ENCODE measurements at regions of chr1 and their contacts with region 1.

Region 1: DNA sequence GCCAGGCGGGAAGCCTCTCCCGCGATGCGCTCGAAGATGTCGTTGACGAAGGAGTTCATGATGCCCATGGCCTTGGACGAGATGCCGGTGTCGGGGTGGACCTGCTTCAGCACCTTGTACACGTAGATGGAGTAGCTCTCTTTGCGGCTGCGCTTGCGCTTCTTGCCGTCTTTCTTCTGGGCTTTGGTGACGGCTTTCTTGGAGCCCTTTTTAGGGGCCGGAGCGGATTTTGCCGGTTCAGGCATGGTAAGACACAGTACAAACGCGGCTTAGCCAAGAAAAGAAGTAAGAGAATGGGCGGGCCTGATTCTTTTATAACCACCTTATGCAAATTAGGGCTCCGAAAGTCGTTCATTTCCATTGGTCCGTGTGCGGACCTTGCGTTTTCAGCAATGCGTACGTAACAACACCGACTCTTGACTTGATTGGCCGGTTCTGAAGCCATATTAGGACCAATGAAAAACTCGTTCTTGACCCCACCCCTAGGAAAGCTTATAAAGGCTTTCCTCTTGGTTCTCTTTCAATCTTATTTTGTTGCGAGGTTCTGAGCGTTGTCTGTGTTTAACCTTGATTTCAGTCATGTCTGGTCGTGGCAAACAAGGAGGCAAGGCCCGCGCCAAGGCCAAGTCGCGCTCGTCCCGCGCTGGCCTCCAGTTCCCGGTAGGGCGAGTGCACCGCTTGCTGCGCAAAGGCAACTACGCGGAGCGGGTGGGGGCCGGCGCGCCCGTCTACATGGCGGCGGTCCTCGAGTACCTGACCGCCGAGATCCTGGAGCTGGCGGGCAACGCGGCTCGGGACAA is 12.8 kb upstream of the BOLA1 start:
- DNase-seq: peak; percentile 90
- CTCF ChIP-seq: no peak

Region 2: GRCh38 chr1:149844101-149844500 is 42.5 kb before region 1 on chr1:
- CTCF ChIA-PET with region 1: interaction called, 4 read pairs
- POLR2A ChIA-PET with region 1: interaction called, 28 read pairs
- DNase-seq: no peak
- CTCF ChIP-seq: no peak

Region 3: DNA sequence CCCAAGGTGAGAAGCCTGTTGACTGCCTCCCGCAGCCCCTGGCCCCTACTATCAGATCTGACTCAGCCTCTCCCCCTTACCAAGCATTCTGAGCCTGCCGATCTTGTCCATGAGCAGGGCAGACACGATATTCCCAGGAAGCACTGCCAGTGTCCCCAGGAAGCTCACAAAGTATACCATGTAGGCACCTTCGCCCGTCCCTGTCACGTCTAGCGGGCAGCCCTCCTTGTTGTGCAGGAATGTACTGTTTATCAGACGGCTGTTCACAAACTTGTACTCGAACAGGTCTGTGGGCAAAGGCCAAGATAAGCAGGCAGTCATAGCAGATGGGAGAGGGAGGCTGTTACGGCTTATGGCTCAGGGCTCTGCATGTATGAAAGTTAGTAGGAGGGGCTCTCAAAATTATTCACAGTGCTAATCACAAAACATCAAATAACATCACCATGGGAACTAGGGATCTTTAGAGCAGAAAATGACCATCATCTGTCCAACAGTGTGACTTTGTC is 20.0 kb after region 1 on chr1:
- CTCF ChIA-PET with region 1: interaction called, 4 read pairs
- POLR2A ChIA-PET with region 1: interaction called, 11 read pairs
- DNase-seq: no peak
- CTCF ChIP-seq: no peak

Region 4: DNA sequence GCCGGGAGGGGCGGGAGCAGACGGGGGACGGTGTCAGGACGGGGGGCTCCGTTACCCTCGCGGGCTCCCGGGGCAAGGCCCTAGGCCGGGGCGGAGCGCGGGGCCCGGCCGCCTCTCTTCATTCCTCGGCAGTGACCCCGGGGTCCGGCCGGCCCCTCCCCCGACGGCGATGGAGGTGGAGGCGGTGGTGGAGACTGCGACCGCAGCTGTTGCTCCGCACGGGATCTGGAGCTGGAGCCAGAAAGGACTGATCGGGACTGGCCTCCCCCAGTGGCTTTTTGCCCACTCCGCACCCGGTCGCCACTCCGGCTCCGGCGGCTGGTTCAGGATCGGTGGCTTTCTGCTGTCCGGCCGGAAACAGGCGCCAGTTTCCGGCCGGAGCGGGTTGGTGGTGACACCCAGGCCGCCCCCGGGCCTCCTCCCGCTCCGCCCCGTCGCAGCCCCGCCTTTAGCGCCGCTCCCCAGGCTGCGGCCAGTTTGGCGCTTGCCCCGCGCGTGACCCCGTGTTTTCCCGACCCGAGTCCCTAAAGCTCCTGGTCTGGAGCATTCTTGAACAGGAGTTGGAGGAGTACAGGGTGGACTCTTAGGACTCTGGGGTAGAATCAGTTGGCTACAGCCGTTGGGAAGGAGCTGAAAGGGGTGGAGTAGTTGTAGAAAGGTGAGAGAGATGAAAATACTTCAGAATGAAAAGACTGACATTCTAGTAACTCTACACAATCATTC is 124.0 kb after region 1 on chr1 and contains the start of gene OTUD7B:
- CTCF ChIA-PET with region 1: interaction called, 5 read pairs
- POLR2A ChIA-PET with region 1: interaction called, 17 read pairs
- DNase-seq: peak; percentile 89
- CTCF ChIP-seq: no peak

Region 5: GRCh38 chr1:150089846-150090520 is 203.4 kb after region 1 on chr1:
- CTCF ChIA-PET with region 1: no interaction called
- POLR2A ChIA-PET with region 1: no interaction called
- DNase-seq: peak; percentile 26
- CTCF ChIP-seq: no peak

Region 6: DNA sequence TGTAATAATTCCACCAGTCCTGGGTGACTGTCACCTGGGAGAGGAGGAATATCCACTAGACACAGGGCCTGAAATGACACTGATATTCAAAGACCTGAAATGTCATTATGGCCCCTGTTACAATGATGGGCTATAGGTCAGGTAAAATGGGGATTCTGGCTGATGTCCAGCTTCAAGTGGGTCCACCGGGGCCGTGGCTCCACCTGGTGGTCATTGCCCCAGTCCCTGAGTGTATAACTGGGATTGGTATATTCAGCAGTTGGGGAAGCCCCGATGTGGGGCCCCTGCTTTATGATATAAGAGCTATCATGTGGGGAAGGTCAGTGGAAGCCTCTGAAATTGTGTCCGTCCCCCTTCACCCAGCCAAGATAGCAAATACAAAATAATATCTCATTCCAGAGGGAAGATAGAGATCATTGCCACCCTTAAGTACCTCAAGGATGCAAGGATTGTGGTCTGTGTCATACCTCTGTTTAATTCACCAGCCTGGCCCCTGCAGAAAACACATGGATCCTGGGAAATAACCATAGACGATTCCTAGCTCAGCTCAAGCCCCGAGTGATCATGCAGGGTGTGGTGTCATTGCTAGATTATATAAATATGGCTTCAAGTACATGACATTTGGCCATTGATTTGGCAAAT is 282.5 kb after region 1 on chr1:
- CTCF ChIA-PET with region 1: interaction called, 18 read pairs
- POLR2A ChIA-PET with region 1: interaction called, 9 read pairs
- DNase-seq: peak; percentile 77
- CTCF ChIP-seq: peak; percentile 81

Region 7: GRCh38 chr1:150383631-150384324 is 497.2 kb after region 1 on chr1:
- CTCF ChIA-PET with region 1: no interaction called
- POLR2A ChIA-PET with region 1: no interaction called
- DNase-seq: no peak
- CTCF ChIP-seq: no peak